PC-3 (cell line): ENCODE measurements at regions of chr4 and their contacts with region 1.

Region 1: GRCh38 chr4:57064811-57065711 is 45.1 kb downstream of the IGFBP7 start:
- DNase-seq: peak; percentile 78
- ATAC-seq: peak; percentile 83
- H3K4me3 ChIP-seq: peak overlapping the region; percentile 18; the same call in 1 of the 2 replicates
- H3K27ac ChIP-seq: peak overlapping the region; percentile 37
- H3K4me1 ChIP-seq: peaks cover 25% of the 10 kb centered on the region
- H3K27me3 ChIP-seq: no peaks in the 10 kb centered on the region
- CTCF ChIP-seq: no peak

Region 2: GRCh38 chr4:57020467-57021101 is 44.5 kb before region 1 on chr4:
- CTCF ChIA-PET with region 1: no interaction called
- POLR2A ChIA-PET with region 1: no interaction called
- intact Hi-C with region 1: loop called (anchors 2 kb)
- DNase-seq: peak; percentile 95
- ATAC-seq: peak; percentile 81
- H3K4me3 ChIP-seq: no peak overlapping the region
- H3K27ac ChIP-seq: peak overlapping the region; percentile 86
- H3K4me1 ChIP-seq: peaks cover 61% of the 10 kb centered on the region
- H3K27me3 ChIP-seq: no peaks in the 10 kb centered on the region
- CTCF ChIP-seq: no peak

Region 3: GRCh38 chr4:57158221-57158620 is 93.2 kb after region 1 on chr4:
- CTCF ChIA-PET with region 1: no interaction called
- POLR2A ChIA-PET with region 1: no interaction called
- intact Hi-C with region 1: loop called (anchors 10 kb)
- DNase-seq: no peak
- ATAC-seq: peak; percentile 35; the same call in 1 of the 2 replicates
- H3K4me3 ChIP-seq: no peak overlapping the region
- H3K27ac ChIP-seq: no peak overlapping the region
- H3K4me1 ChIP-seq: peaks cover 11% of the 10 kb centered on the region
- H3K27me3 ChIP-seq: peaks cover 7% of the 10 kb centered on the region; the same call in 1 of the 2 replicates
- CTCF ChIP-seq: peak; percentile 34; the same call in 1 of the 2 replicates